ENCODE measurements at regions of chr1 and their contacts with region 1.

Region 1: GRCh38 chr1:226642876-226643576 is 94.5 kb downstream of the STUM start:
- DNase-seq: peak in 5 of 10 donors; percentile 46 to 81 (median 65)
- H3K4me3 ChIP-seq: no peak overlapping the region
- H3K27ac ChIP-seq: peak overlapping the region in 51 of 59 donors; percentile 12 to 87 (median 72)
- H3K27me3 ChIP-seq: no peaks in the 10 kb centered on the region
- CTCF ChIP-seq: no peak

Region 2: GRCh38 chr1:226624526-226624925 is 18.5 kb before region 1 on chr1:
- intact Hi-C with region 1: no loop called
- DNase-seq: peak in 3 of 10 donors; percentile 16 to 21 (median 21)
- H3K4me3 ChIP-seq: no peak overlapping the region
- H3K27ac ChIP-seq: no peak overlapping the region
- H3K27me3 ChIP-seq: no peaks in the 10 kb centered on the region
- CTCF ChIP-seq: no peak

Region 3: GRCh38 chr1:226702957-226703831 is 60.2 kb after region 1 on chr1:
- intact Hi-C with region 1: loop called in 1 of 2 experiments (anchors 5 kb)
- DNase-seq: peak; percentile 52 to 90 (median 68)
- H3K4me3 ChIP-seq: peak overlapping the region; percentile 52 to 87 (median 72)
- H3K27ac ChIP-seq: peak overlapping the region; percentile 90 to 100 (median 99)
- H3K27me3 ChIP-seq: no peaks in the 10 kb centered on the region
- CTCF ChIP-seq: peak in 33 of 56 donors; percentile 1 to 55 (median 25)

Measured in dorsolateral prefrontal cortex (tissue), 120 donors.